Left lung (tissue), 14 donors: ENCODE measurements at regions of chr19 and their contacts with region 1.

Region 1: DNA sequence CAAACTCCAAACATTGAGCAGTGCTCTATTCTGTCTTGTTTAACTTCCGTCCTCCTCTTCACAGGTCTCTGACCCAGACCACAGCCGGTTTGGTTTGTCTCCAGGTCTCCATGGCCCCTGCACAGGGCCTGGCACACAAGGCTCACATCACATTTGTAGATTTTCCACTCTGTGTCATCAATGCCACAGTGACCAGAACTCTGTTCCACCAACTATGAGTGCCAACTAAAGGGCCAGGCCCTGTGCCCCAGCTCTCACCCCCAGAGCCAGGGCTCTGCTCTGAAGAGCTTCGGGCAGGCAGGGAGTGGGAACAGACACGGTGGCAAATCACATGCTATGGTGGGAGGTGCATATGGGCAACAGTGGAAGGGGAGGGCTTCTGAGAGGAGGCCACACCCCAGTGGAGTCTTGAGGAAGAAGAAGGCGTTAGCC is 16.0 kb downstream of the SMG9 start:
- DNase-seq: peak in 1 of 4 donors; percentile 48
- ATAC-seq: peak; percentile 72
- H3K4me3 ChIP-seq: no peak overlapping the region
- H3K27ac ChIP-seq: no peak overlapping the region
- H3K4me1 ChIP-seq: no peaks in the 10 kb centered on the region
- H3K27me3 ChIP-seq: no peaks in the 10 kb centered on the region
- CTCF ChIP-seq: no peak

Region 2: GRCh38 chr19:43675269-43675879 is 63.4 kb before region 1 on chr19:
- intact Hi-C with region 1: loop called in 1 of 2 experiments (anchors 10 kb)
- DNase-seq: peak in 2 of 4 donors; percentile 82
- ATAC-seq: peak; percentile 78
- H3K4me3 ChIP-seq: no peak overlapping the region
- H3K27ac ChIP-seq: peak overlapping the region; percentile 54 to 97
- H3K4me1 ChIP-seq: peaks cover 4 to 52% of the 10 kb centered on the region in 2 donors
- H3K27me3 ChIP-seq: no peaks in the 10 kb centered on the region
- CTCF ChIP-seq: no peak

Region 3: GRCh38 chr19:43826787-43827754 is 88.3 kb after region 1 on chr19 and contains the start of gene ZNF283:
- intact Hi-C with region 1: no loop called
- DNase-seq: peak; percentile 77 to 93 (median 91)
- ATAC-seq: peak; percentile 100
- H3K4me3 ChIP-seq: peak within 1 kb of the TSS; percentile 66 to 71
- H3K27ac ChIP-seq: peak within 1 kb of the TSS in 1 of 2 donors; percentile 64
- H3K4me1 ChIP-seq: peaks cover 6 to 14% of the 10 kb centered on the region in 2 donors
- H3K27me3 ChIP-seq: peaks cover 0 to 13% of the 10 kb centered on the region in 2 donors
- CTCF ChIP-seq: no peak
- polyA plus RNA-seq, gene ZNF283: 19.2 to 26.8 (median 22.6) TPM